Natural killer cell (primary cell): ENCODE measurements at regions of chr11 and their contacts with region 1.

Region 1: DNA sequence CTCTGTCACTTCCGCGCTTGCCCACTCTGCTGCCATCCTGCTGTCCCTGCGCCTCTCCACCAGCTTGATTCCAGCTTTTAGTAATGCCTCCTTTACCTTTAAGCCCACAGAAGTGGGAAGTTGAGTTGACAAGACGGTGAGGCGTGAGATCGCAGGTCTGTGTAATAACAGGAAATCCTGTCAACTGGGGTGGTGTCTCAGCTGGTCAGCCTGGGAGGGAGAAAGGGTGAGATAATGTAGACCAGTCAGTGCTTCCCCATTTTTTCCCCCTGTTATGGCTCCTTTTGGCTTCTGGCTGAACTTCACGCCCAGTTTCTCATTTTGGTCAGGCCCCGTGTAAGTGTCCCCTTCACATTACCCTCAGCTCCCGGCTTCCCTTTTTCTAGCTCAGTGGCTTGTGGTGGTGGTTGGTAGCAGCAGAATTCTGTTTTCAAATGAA is 98.9 kb downstream of the TRAF6 start:
- DNase-seq: peak; percentile 40 to 61
- ATAC-seq: peak; percentile 71 to 91 (median 78)
- H3K4me3 ChIP-seq: no peak overlapping the region
- H3K4me3 Mint-ChIP-seq: peak overlapping the region; percentile 94
- H3K27ac ChIP-seq: peak overlapping the region; percentile 80
- H3K27ac Mint-ChIP-seq: peak overlapping the region; percentile 97 to 99
- H3K4me1 ChIP-seq: peaks cover 69% of the 10 kb centered on the region
- H3K4me1 Mint-ChIP-seq: peaks cover 79 to 83% of the 10 kb centered on the region in 2 donors
- H3K27me3 ChIP-seq: no peaks in the 10 kb centered on the region
- H3K27me3 Mint-ChIP-seq: no peaks in the 10 kb centered on the region
- CTCF ChIP-seq: no peak

Region 2: GRCh38 chr11:35464308-35464707 is 946.9 kb before region 1 on chr11:
- intact Hi-C with region 1: no loop called
- DNase-seq: no peak
- ATAC-seq: no peak
- H3K4me3 ChIP-seq: no peak overlapping the region
- H3K4me3 Mint-ChIP-seq: no peak overlapping the region
- H3K27ac ChIP-seq: no peak overlapping the region
- H3K27ac Mint-ChIP-seq: no peak overlapping the region
- H3K4me1 ChIP-seq: no peaks in the 10 kb centered on the region
- H3K4me1 Mint-ChIP-seq: no peaks in the 10 kb centered on the region
- H3K27me3 ChIP-seq: no peaks in the 10 kb centered on the region
- H3K27me3 Mint-ChIP-seq: peaks cover 14 to 54% of the 10 kb centered on the region in 2 donors
- CTCF ChIP-seq: no peak

Region 3: DNA sequence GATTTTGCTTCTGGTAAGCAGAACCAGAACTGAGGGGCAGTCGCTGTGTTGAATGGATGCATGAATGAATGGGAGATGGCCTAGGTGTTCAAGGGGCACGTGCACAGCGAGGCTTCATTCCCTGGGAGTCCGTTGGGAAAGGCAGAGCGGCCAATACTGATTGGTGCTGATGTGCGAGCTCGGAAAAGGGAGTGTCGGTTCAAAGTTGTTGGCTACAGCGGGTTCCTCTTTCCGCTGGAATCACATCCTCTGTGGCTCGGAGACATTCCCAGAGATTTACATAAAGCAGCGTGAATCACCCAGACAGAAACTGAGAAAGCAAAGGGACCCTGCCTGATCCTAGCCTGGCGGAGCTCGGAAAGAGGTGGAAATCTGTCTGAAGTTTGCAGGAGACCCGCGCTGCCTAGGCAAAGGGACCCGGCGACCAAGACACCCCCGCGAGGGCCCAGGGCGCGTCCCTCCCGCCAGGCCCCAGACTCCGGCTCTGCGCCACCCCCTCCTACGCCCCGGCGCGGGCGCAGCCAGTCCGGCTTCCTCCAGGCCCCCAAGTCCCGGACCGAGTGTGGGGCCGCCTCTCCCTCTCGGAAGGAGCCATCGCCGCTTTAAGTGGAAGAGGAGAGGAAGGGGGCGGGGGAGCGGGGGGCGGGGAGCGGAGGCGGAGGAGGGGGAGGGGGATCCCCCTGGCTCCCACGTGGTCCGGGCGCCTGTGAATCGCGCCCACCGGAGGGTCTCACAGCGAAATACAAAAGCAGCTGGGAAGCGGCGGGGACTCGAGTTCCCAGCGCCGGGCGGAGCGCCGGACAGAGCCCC is 793.3 kb before region 1 on chr11 and contains the start of gene FJX1:
- intact Hi-C with region 1: no loop called
- DNase-seq: peak in 1 of 2 donors; percentile 8
- ATAC-seq: peak in 2 of 3 donors; percentile 20 to 24
- H3K4me3 ChIP-seq: no peak within 1 kb of the TSS
- H3K4me3 Mint-ChIP-seq: peak within 1 kb of the TSS; percentile 83
- H3K27ac ChIP-seq: no peak within 1 kb of the TSS
- H3K27ac Mint-ChIP-seq: no peak within 1 kb of the TSS
- H3K4me1 ChIP-seq: peaks cover 17% of the 10 kb centered on the region
- H3K4me1 Mint-ChIP-seq: peaks cover 3 to 5% of the 10 kb centered on the region in 2 donors
- H3K27me3 ChIP-seq: peaks cover 28% of the 10 kb centered on the region
- H3K27me3 Mint-ChIP-seq: peaks cover 45 to 82% of the 10 kb centered on the region in 2 donors
- CTCF ChIP-seq: no peak
- total RNA-seq, gene FJX1: not detected

Region 4: GRCh38 chr11:36425561-36426081 is 14.4 kb after region 1 on chr11:
- intact Hi-C with region 1: loop called (anchors 2 kb)
- DNase-seq: no peak
- ATAC-seq: no peak
- H3K4me3 ChIP-seq: no peak overlapping the region
- H3K4me3 Mint-ChIP-seq: peak overlapping the region; percentile 75
- H3K27ac ChIP-seq: peak overlapping the region; percentile 65
- H3K27ac Mint-ChIP-seq: peak overlapping the region; percentile 89 to 97
- H3K4me1 ChIP-seq: peaks cover 63% of the 10 kb centered on the region
- H3K4me1 Mint-ChIP-seq: peaks cover 70 to 78% of the 10 kb centered on the region in 2 donors
- H3K27me3 ChIP-seq: no peaks in the 10 kb centered on the region
- H3K27me3 Mint-ChIP-seq: no peaks in the 10 kb centered on the region
- CTCF ChIP-seq: no peak

Region 5: GRCh38 chr11:36450110-36450572 is 38.9 kb after region 1 on chr11:
- intact Hi-C with region 1: loop called (anchors 5 kb)
- DNase-seq: peak in 1 of 2 donors; percentile 27
- ATAC-seq: peak in 2 of 3 donors; percentile 34 to 47
- H3K4me3 ChIP-seq: no peak overlapping the region
- H3K4me3 Mint-ChIP-seq: peak overlapping the region; percentile 73
- H3K27ac ChIP-seq: no peak overlapping the region
- H3K27ac Mint-ChIP-seq: peak overlapping the region; percentile 87 to 90
- H3K4me1 ChIP-seq: peaks cover 62% of the 10 kb centered on the region
- H3K4me1 Mint-ChIP-seq: peaks cover 85 to 94% of the 10 kb centered on the region in 2 donors
- H3K27me3 ChIP-seq: no peaks in the 10 kb centered on the region
- H3K27me3 Mint-ChIP-seq: no peaks in the 10 kb centered on the region
- CTCF ChIP-seq: no peak

Region 6: GRCh38 chr11:37755521-37755920 is 1344.3 kb after region 1 on chr11:
- intact Hi-C with region 1: no loop called
- DNase-seq: no peak
- ATAC-seq: peak in 1 of 3 donors; percentile 46
- H3K4me3 ChIP-seq: no peak overlapping the region
- H3K4me3 Mint-ChIP-seq: no peak overlapping the region
- H3K27ac ChIP-seq: no peak overlapping the region
- H3K27ac Mint-ChIP-seq: no peak overlapping the region
- H3K4me1 ChIP-seq: no peaks in the 10 kb centered on the region
- H3K4me1 Mint-ChIP-seq: peaks cover 0 to 10% of the 10 kb centered on the region in 2 donors
- H3K27me3 ChIP-seq: no peaks in the 10 kb centered on the region
- H3K27me3 Mint-ChIP-seq: no peaks in the 10 kb centered on the region
- CTCF ChIP-seq: no peak